Mammary epithelial cell (primary cell): ENCODE measurements at regions of chr10 and their contacts with region 1.

Region 1: DNA sequence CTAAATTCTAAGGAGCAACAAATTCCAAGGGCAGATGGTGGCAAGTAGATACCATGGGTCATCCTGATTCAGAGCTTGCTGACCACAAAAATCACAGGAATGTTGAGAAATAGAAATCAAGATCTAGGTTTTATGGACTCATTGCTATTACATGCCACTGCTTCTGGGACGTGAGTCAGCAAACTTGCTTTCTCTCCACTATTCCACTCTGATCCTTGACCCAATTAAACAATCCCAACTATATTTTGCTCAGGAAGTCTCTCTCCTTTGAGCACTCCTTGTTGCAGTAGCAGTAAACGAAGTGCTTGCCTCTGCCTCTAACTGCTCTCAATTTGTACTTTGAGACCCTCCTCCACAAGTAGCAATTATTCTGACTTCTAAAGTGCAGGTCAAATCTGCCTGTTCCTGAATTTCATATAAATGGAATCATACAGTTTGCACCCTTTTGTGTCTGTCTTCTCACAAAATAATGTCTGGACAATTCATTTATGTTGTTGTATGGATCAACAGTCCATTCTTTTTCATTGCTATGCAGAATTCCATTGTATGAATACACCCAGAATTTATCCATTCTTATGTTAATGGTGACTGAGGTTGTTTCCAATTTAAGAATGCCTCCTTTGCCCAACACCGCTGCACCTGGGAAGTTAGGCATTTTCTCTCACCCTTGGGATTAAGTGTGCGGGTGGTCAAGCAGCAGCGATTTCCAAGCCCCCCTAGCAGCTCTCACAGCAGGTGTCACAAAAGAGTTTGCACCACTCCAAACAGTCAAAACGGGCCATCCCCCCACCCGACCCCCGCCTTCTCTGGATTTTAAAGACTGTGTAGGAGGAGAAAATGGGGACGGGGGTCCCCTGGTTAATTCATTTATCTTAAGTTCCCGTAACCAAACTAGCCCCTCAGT is 35.9 kb downstream of the ACSM6 start:
- DNase-seq: peak; percentile 96
- H3K4me3 ChIP-seq: peak overlapping the region in 1 of 3 experiments; percentile 28
- H3K27ac ChIP-seq: peak overlapping the region; percentile 100
- H3K4me1 ChIP-seq: peaks cover 32% of the 10 kb centered on the region
- H3K27me3 ChIP-seq: no peaks in the 10 kb centered on the region
- CTCF ChIP-seq: no peak

Region 2: GRCh38 chr10:95266674-95267095 is 36.7 kb after region 1 on chr10:
- CTCF ChIA-PET with region 1: no interaction called
- dilution Hi-C with region 1: no loop called
- in situ Hi-C with region 1: no loop called
- intact Hi-C with region 1: loop called (anchors 2 kb)
- DNase-seq: peak; percentile 97
- H3K4me3 ChIP-seq: no peak overlapping the region
- H3K27ac ChIP-seq: peak overlapping the region; percentile 99
- H3K4me1 ChIP-seq: peaks cover 50% of the 10 kb centered on the region
- H3K27me3 ChIP-seq: no peaks in the 10 kb centered on the region
- CTCF ChIP-seq: no peak